ENCODE measurements at regions of chr10 and their contacts with region 1.

Region 1: DNA sequence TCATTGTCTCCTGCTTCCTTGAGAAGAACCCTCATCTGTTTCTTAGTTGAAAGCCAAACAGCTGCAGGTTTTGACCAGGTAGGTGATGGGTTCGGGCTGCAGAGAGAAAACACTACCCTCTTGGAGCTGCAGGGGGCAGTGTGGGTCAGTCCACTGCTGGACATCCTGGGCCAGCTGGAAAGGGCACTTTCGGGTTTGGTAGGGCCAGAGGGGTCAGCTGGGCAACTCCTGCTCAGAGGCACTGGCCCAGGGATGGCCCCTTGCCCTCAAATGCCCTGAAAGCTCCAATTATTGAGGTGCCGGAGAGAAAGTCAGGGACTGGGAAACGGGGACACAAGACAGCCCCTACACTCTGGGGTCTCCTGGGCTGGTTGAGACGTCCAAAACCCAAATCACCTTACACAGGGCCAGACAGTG is 90.7 kb downstream of the MKI67 start:
- H3K4me3 ChIP-seq: no peak overlapping the region
- H3K27ac ChIP-seq: no peak overlapping the region
- H3K4me1 ChIP-seq: no peaks in the 10 kb centered on the region
- CTCF ChIP-seq: peak; percentile 32

Region 2: DNA sequence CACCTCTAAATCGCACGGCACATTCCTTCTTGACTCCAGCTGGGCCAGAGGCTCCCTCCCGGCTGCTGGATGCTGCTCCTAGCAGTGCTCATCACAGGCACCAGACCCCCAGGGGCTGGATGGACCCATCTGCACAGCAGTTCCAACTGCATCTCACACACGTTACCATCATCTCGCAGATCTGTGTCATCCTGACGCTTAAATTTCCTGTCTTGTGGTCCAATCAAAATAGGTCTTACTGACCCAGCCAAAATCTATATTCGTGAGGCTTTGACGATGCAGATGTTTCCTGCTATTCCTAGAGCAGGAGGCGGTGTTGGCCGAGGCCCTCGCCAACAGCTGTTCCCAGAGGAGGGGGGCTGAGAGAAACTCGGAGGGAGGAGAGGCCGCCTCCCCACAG is 17.3 kb before region 1 on chr10:
- CTCF ChIA-PET with region 1: interaction called, 27 read pairs
- POLR2A ChIA-PET with region 1: no interaction called
- H3K4me3 ChIP-seq: no peak overlapping the region
- H3K27ac ChIP-seq: no peak overlapping the region
- H3K4me1 ChIP-seq: no peaks in the 10 kb centered on the region
- CTCF ChIP-seq: no peak

Region 3: GRCh38 chr10:128047351-128047750 is 11.8 kb after region 1 on chr10:
- CTCF ChIA-PET with region 1: interaction called, 35 read pairs
- POLR2A ChIA-PET with region 1: no interaction called
- H3K4me3 ChIP-seq: peak overlapping the region; percentile 25
- H3K27ac ChIP-seq: no peak overlapping the region; the same call in 1 of the 2 replicates
- H3K4me1 ChIP-seq: peaks cover 3% of the 10 kb centered on the region
- CTCF ChIP-seq: no peak

Region 4: GRCh38 chr10:128059266-128059981 is 23.9 kb after region 1 on chr10:
- CTCF ChIA-PET with region 1: interaction called, 17 read pairs
- POLR2A ChIA-PET with region 1: no interaction called
- H3K4me3 ChIP-seq: no peak overlapping the region
- H3K27ac ChIP-seq: no peak overlapping the region
- H3K4me1 ChIP-seq: no peaks in the 10 kb centered on the region
- CTCF ChIP-seq: no peak

Region 5: GRCh38 chr10:128896116-128896795 is 860.7 kb after region 1 on chr10:
- CTCF ChIA-PET with region 1: no interaction called
- POLR2A ChIA-PET with region 1: no interaction called
- H3K4me3 ChIP-seq: no peak overlapping the region
- H3K27ac ChIP-seq: no peak overlapping the region
- H3K4me1 ChIP-seq: no peaks in the 10 kb centered on the region
- CTCF ChIP-seq: no peak